ENCODE measurements at regions of chr7 and their contacts with region 1.

Region 1: GRCh38 chr7:155380221-155380861 is 77.6 kb upstream of the EN2 start:
- DNase-seq: peak; percentile 86 to 97 (median 94)
- ATAC-seq: peak; percentile 98
- H3K4me3 ChIP-seq: no peak overlapping the region
- H3K27ac ChIP-seq: no peak overlapping the region
- H3K4me1 ChIP-seq: peaks cover 0 to 19% of the 10 kb centered on the region in 2 experiments; a peak in 1 of 5 replicates
- H3K27me3 ChIP-seq: peaks cover 85 to 87% of the 10 kb centered on the region in 2 experiments
- CTCF ChIP-seq: peak; percentile 86 to 96 (median 91)
- EP300 ChIP-seq: no peak
- POLR2A ChIP-seq: no peak
- RAD21 ChIP-seq: peak; percentile 55 to 88

Region 2: GRCh38 chr7:155414547-155415492 is 34.5 kb after region 1 on chr7:
- CTCF ChIA-PET with region 1: no interaction called
- POLR2A ChIA-PET with region 1: no interaction called
- in situ Hi-C with region 1: no loop called
- intact Hi-C with region 1: no loop called
- DNase-seq: peak in 3 of 4 experiments; percentile 37 to 50 (median 41)
- ATAC-seq: peak; percentile 25; the same call in 1 of the 3 replicates
- H3K4me3 ChIP-seq: no peak overlapping the region
- H3K27ac ChIP-seq: no peak overlapping the region
- H3K4me1 ChIP-seq: peaks cover 0 to 11% of the 10 kb centered on the region in 2 experiments; a peak in 2 of 5 replicates
- H3K27me3 ChIP-seq: peaks cover 48 to 79% of the 10 kb centered on the region in 2 experiments
- CTCF ChIP-seq: no peak
- EP300 ChIP-seq: no peak
- POLR2A ChIP-seq: peak; percentile 44; the same call in 1 of the 2 replicates
- RAD21 ChIP-seq: no peak

Region 3: GRCh38 chr7:155533827-155534690 is 153.7 kb after region 1 on chr7:
- CTCF ChIA-PET with region 1: no interaction called
- POLR2A ChIA-PET with region 1: no interaction called
- in situ Hi-C with region 1: no loop called
- intact Hi-C with region 1: loop called (anchors 5 kb)
- DNase-seq: peak; percentile 60 to 92 (median 90)
- ATAC-seq: peak; percentile 95
- H3K4me3 ChIP-seq: no peak overlapping the region
- H3K27ac ChIP-seq: no peak overlapping the region; the same call in 2 of the 3 replicates
- H3K4me1 ChIP-seq: peaks cover 0 to 16% of the 10 kb centered on the region in 2 experiments; a peak in 3 of 5 replicates
- H3K27me3 ChIP-seq: peaks cover 72 to 85% of the 10 kb centered on the region in 2 experiments
- CTCF ChIP-seq: peak; percentile 71 to 89 (median 81)
- EP300 ChIP-seq: no peak
- POLR2A ChIP-seq: no peak
- RAD21 ChIP-seq: peak; percentile 36 to 66

Region 4: GRCh38 chr7:155738652-155739537 is 358.6 kb after region 1 on chr7:
- CTCF ChIA-PET with region 1: interaction called, 11 read pairs
- POLR2A ChIA-PET with region 1: interaction called, 3 read pairs
- in situ Hi-C with region 1: no loop called
- intact Hi-C with region 1: loop called (anchors 1 kb)
- DNase-seq: peak in 1 of 4 experiments; percentile 80
- ATAC-seq: peak; percentile 88
- H3K4me3 ChIP-seq: no peak overlapping the region
- H3K27ac ChIP-seq: no peak overlapping the region
- H3K4me1 ChIP-seq: no peaks in the 10 kb centered on the region
- H3K27me3 ChIP-seq: no peaks in the 10 kb centered on the region
- CTCF ChIP-seq: peak; percentile 72 to 87 (median 87)
- EP300 ChIP-seq: no peak
- POLR2A ChIP-seq: no peak
- RAD21 ChIP-seq: peak; percentile 67 to 85

Region 5: GRCh38 chr7:155763691-155764437 is 383.5 kb after region 1 on chr7:
- CTCF ChIA-PET with region 1: interaction called, 7 read pairs
- POLR2A ChIA-PET with region 1: no interaction called
- in situ Hi-C with region 1: loop called (anchors 25 kb)
- intact Hi-C with region 1: loop called (anchors 1 kb)
- DNase-seq: no peak
- ATAC-seq: no peak
- H3K4me3 ChIP-seq: no peak overlapping the region
- H3K27ac ChIP-seq: no peak overlapping the region
- H3K4me1 ChIP-seq: no peaks in the 10 kb centered on the region
- H3K27me3 ChIP-seq: no peaks in the 10 kb centered on the region
- CTCF ChIP-seq: no peak
- EP300 ChIP-seq: no peak
- POLR2A ChIP-seq: no peak
- RAD21 ChIP-seq: no peak

Measured in K562 (cell line).